ENCODE measurements at regions of chr12 and their contacts with region 1.

Region 1: GRCh38 chr12:76544601-76545261 is 14.8 kb downstream of the OSBPL8 start:
- DNase-seq: no peak
- ATAC-seq: no peak
- H3K4me3 ChIP-seq: no peak overlapping the region
- H3K4me3 Mint-ChIP-seq: peak overlapping the region in 2 of 10 donors; percentile 6 to 17
- H3K27ac ChIP-seq: no peak overlapping the region
- H3K27ac Mint-ChIP-seq: peak overlapping the region in 1 of 9 donors; percentile 26
- H3K4me1 ChIP-seq: peaks cover 25 to 45% of the 10 kb centered on the region in 2 donors
- H3K4me1 Mint-ChIP-seq: peaks cover 51 to 94% (median 83%) of the 10 kb centered on the region in 7 donors
- H3K27me3 ChIP-seq: no peaks in the 10 kb centered on the region
- H3K27me3 Mint-ChIP-seq: no peaks in the 10 kb centered on the region

Region 2: DNA sequence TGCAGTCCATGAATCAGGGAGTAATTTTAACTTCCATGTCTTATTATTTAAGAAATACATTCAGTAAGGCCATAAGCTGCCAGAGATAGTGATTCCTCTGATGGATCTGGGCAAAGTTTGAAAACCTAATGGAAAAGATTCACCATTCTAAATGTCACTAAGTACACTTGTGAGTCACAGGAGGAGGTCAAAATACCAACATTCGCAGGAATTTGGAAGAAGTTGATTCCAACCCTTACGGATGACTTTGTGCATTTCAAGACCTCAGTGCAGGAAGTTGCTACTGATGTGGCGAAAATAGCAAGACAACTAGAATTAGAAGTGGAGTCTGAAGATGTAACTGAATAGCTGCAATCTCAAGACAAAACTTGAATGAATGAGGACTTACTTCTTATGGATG is 55.0 kb before region 1 on chr12:
- CTCF ChIA-PET with region 1: no interaction called
- POLR2A ChIA-PET with region 1: no interaction called
- intact Hi-C with region 1: no loop called
- DNase-seq: no peak
- ATAC-seq: no peak
- H3K4me3 ChIP-seq: no peak overlapping the region
- H3K4me3 Mint-ChIP-seq: peak overlapping the region in 2 of 10 donors; percentile 21 to 28
- H3K27ac ChIP-seq: no peak overlapping the region
- H3K27ac Mint-ChIP-seq: peak overlapping the region in 3 of 9 donors; percentile 1 to 40 (median 8)
- H3K4me1 ChIP-seq: no peaks in the 10 kb centered on the region
- H3K4me1 Mint-ChIP-seq: peaks cover 11 to 60% (median 39%) of the 10 kb centered on the region in 7 donors
- H3K27me3 ChIP-seq: no peaks in the 10 kb centered on the region
- H3K27me3 Mint-ChIP-seq: no peaks in the 10 kb centered on the region

Region 3: DNA sequence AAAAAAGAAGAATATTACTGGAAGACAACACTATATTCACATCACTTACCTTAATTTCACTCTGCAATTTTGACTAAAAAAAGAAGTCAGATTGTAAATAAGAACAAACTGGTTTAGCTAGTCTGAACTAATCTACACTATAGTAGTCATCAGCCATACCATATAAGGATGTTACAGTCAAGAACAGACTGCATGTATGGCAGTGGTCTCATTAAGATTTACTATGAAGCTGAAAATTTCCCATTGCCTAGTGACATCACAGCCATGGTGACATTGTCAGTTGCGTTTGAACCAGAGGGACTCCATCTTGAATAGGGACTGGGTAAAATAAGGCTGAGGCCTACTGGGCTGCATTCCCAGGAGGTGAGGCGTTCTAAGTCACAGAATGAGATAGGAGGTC is 36.6 kb before region 1 on chr12:
- CTCF ChIA-PET with region 1: no interaction called
- POLR2A ChIA-PET with region 1: no interaction called
- intact Hi-C with region 1: loop called in 1 of 2 experiments (anchors 5 kb)
- DNase-seq: no peak
- ATAC-seq: peak; percentile 21
- H3K4me3 ChIP-seq: no peak overlapping the region
- H3K4me3 Mint-ChIP-seq: peak overlapping the region in 1 of 10 donors; percentile 51
- H3K27ac ChIP-seq: no peak overlapping the region
- H3K27ac Mint-ChIP-seq: peak overlapping the region in 1 of 9 donors; percentile 26
- H3K4me1 ChIP-seq: no peaks in the 10 kb centered on the region
- H3K4me1 Mint-ChIP-seq: peaks cover 5 to 58% (median 48%) of the 10 kb centered on the region in 7 donors
- H3K27me3 ChIP-seq: no peaks in the 10 kb centered on the region
- H3K27me3 Mint-ChIP-seq: no peaks in the 10 kb centered on the region

Region 4: GRCh38 chr12:76645934-76646333 is 101.2 kb after region 1 on chr12:
- CTCF ChIA-PET with region 1: no interaction called
- POLR2A ChIA-PET with region 1: no interaction called
- intact Hi-C with region 1: no loop called
- DNase-seq: no peak
- ATAC-seq: no peak
- H3K4me3 ChIP-seq: no peak overlapping the region
- H3K4me3 Mint-ChIP-seq: no peak overlapping the region
- H3K27ac ChIP-seq: no peak overlapping the region
- H3K27ac Mint-ChIP-seq: no peak overlapping the region
- H3K4me1 ChIP-seq: no peaks in the 10 kb centered on the region
- H3K4me1 Mint-ChIP-seq: no peaks in the 10 kb centered on the region
- H3K27me3 ChIP-seq: no peaks in the 10 kb centered on the region
- H3K27me3 Mint-ChIP-seq: peaks cover 0 to 15% (median 4%) of the 10 kb centered on the region in 5 donors